Keratinocyte (primary cell): ENCODE measurements at regions of chr2 and their contacts with region 1.

Region 1: DNA sequence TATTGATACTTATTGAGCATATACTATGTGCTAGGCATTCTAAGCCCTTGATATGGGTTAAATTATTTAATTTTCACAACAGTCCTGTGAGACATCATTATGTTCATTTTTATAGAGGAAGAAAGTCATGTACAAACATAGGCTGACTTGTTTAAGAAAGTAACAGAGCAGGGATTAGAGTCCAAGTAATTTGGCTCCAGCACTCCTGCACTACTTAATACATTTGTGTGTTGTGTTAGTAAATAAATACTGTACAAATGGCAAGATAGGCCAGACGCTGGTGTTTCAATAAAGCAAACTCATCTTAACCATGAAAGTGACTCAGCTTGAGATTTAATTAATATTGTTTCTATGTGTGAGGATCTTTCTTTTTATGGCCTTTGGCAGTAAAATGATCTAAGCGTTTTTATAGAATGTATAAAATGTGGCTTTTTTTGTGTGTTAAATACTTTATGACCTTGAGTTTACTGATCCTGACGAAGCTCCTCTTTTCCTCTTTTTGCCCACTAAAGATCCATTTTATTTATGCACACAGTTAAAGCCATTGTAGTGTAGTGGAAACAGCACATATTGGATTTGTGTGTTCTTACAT is 21.3 kb downstream of the NBEAL1 start:
- DNase-seq: no peak
- H3K4me3 ChIP-seq: no peak overlapping the region
- H3K27ac ChIP-seq: no peak overlapping the region
- H3K4me1 ChIP-seq: peaks cover 13% of the 10 kb centered on the region
- H3K27me3 ChIP-seq: no peaks in the 10 kb centered on the region
- CTCF ChIP-seq: no peak

Region 2: DNA sequence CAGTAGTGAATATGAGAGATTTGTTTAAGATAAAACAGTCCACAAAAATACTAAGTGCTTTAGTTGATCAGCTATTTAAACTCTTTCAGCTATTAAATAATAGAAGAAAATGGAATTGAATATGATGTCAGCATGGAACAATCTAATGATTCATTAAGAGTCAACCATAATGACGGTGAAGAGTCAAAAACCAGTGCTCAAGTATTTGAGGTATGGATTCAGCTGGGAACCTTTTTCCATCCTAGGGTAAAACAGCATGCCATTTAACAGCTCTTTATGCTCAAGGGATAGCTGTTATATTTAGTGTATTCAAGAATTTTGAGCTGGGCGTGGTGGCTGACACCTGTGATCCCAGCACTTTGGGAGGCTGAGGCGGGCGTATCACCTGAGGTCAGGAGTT is 94.2 kb before region 1 on chr2:
- dilution Hi-C with region 1: no loop called
- DNase-seq: no peak
- H3K4me3 ChIP-seq: no peak overlapping the region
- H3K27ac ChIP-seq: no peak overlapping the region
- H3K4me1 ChIP-seq: peaks cover 3% of the 10 kb centered on the region
- H3K27me3 ChIP-seq: no peaks in the 10 kb centered on the region
- CTCF ChIP-seq: no peak

Region 3: GRCh38 chr2:202982779-202983491 is 53.0 kb before region 1 on chr2:
- dilution Hi-C with region 1: no loop called
- DNase-seq: no peak
- H3K4me3 ChIP-seq: no peak overlapping the region
- H3K27ac ChIP-seq: no peak overlapping the region
- H3K4me1 ChIP-seq: no peaks in the 10 kb centered on the region
- H3K27me3 ChIP-seq: no peaks in the 10 kb centered on the region
- CTCF ChIP-seq: no peak

Region 4: DNA sequence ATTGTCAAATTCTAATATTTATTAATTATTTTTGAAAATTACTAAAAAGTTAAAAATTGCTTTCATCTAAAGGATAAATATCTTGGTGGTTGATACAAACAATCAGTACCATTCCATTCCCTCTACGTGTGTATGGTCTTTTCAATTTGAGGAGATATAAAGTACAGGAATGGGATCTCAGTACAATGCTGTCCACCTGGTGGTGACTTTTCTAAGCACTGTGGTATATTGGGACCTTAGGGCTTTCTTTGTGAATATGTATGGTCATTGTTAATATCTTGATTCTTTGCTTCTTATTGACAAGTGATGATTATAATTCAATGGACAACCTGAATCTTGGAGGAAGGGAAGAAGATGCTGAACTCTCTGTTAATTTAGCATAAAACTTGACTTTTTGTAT is 61.8 kb after region 1 on chr2:
- dilution Hi-C with region 1: loop called (anchors 10 kb)
- DNase-seq: no peak
- H3K4me3 ChIP-seq: no peak overlapping the region
- H3K27ac ChIP-seq: no peak overlapping the region
- H3K4me1 ChIP-seq: no peaks in the 10 kb centered on the region
- H3K27me3 ChIP-seq: no peaks in the 10 kb centered on the region
- CTCF ChIP-seq: peak in 1 of 3 experiments; percentile 29